Heart right ventricle (tissue), 16 donors: ENCODE measurements at regions of chr3 and their contacts with region 1.

Region 1: GRCh38 chr3:172666873-172667694 is 43.8 kb downstream of the NCEH1 start:
- DNase-seq: peak in 1 of 2 donors; percentile 86
- ATAC-seq: peak; percentile 94 to 99 (median 96)
- H3K4me3 ChIP-seq: no peak overlapping the region
- H3K27ac ChIP-seq: no peak overlapping the region
- H3K4me1 ChIP-seq: peaks cover 3 to 38% (median 17%) of the 10 kb centered on the region in 9 donors
- H3K27me3 ChIP-seq: no peaks in the 10 kb centered on the region
- CTCF ChIP-seq: peak; percentile 73 to 87 (median 82)

Region 2: GRCh38 chr3:172355839-172356238 is 311.2 kb before region 1 on chr3:
- intact Hi-C with region 1: loop called in 3 of 10 experiments (anchors 10 kb)
- DNase-seq: no peak
- ATAC-seq: peak in 6 of 8 donors; percentile 45 to 75 (median 62)
- H3K4me3 ChIP-seq: no peak overlapping the region
- H3K27ac ChIP-seq: peak overlapping the region in 2 of 10 donors; percentile 12 to 22
- H3K4me1 ChIP-seq: peaks cover 0 to 44% (median 28%) of the 10 kb centered on the region in 9 donors
- H3K27me3 ChIP-seq: no peaks in the 10 kb centered on the region
- CTCF ChIP-seq: no peak

Region 3: DNA sequence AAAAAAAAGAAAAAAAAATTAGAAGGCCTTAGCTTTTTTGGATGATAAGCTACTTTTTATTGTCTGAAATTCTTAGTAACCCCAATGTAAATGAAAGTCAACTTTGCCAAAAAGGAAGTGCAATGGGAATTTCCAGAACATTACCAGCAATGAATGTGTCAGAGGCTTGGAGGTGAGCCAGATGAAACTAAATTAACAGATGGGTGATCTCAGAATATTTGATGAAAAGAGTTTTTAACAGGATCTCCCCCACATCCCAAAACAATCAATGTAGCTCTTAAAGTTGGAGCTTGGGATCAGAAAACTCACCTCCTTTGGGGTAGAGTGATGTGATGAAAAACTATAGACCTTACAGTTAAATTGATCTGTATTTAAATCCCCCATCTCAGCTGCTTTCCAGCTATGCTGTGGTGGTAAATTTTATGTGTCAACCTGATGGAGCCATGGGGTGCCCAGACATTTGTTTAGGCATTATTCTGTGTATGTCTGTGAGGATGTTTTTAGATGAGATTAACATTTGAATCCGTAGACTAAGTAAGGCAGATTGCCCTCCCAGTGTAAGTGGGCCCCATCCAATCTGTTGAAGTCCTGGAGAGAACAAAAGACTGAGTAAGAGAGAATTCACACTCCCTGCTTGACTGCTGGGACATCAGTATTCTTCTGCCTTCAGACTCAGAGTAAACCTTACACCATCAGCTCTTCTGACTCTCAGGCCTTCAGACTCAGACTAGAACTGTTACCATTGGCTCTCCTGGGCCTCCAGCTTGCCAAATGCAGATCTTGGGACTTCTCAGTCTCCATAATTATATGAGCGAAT is 59.6 kb before region 1 on chr3:
- intact Hi-C with region 1: no loop called
- DNase-seq: peak in 1 of 2 donors; percentile 56
- ATAC-seq: peak in 7 of 8 donors; percentile 24 to 75 (median 55)
- H3K4me3 ChIP-seq: no peak overlapping the region
- H3K27ac ChIP-seq: peak overlapping the region in 7 of 10 donors; percentile 32 to 83 (median 53)
- H3K4me1 ChIP-seq: peaks cover 0 to 26% (median 5%) of the 10 kb centered on the region in 9 donors
- H3K27me3 ChIP-seq: no peaks in the 10 kb centered on the region
- CTCF ChIP-seq: no peak